ENCODE measurements at regions of chr6 and their contacts with region 1.

Region 1: DNA sequence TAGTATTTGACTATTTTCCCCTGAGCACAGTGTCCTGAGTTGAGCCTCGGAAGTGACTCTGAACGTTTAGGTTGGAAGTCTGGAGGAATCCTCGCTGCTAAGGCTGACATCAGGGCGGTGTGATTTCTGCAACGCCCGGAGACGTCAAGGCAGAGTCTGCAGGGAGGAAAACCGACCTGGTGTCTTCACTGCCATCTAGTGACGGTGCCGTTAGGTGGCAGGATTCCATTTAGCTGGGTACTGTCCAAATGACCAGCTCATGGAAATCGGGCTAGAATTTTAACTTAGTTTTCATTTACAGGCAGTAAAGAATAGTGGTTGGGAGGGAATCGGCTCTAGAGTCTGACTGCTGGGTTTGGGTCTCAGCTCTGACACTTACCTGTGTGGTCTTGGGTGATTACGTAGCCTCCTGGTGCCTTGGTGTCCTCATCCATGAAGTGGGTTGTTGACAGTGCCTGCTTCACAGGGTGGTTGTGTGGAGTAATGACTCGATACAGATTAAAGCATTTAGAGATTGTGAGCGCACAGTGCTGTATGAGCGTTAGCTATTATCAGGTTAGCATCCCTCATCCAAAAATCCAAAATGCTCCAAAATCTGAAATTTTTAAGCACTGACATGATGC is 35.0 kb downstream of the FOXF2 start:
- DNase-seq: no peak
- H3K4me3 ChIP-seq: no peak overlapping the region
- H3K4me3 Mint-ChIP-seq: peak overlapping the region in 1 of 8 donors; percentile 38
- H3K27ac ChIP-seq: no peak overlapping the region
- H3K27ac Mint-ChIP-seq: no peak overlapping the region
- H3K4me1 ChIP-seq: peaks cover 4% of the 10 kb centered on the region
- H3K4me1 Mint-ChIP-seq: peaks cover 2 to 4% (median 4%) of the 10 kb centered on the region in 4 donors
- H3K27me3 ChIP-seq: no peaks in the 10 kb centered on the region
- H3K27me3 Mint-ChIP-seq: peaks cover 22 to 26% of the 10 kb centered on the region in 2 donors

Region 2: DNA sequence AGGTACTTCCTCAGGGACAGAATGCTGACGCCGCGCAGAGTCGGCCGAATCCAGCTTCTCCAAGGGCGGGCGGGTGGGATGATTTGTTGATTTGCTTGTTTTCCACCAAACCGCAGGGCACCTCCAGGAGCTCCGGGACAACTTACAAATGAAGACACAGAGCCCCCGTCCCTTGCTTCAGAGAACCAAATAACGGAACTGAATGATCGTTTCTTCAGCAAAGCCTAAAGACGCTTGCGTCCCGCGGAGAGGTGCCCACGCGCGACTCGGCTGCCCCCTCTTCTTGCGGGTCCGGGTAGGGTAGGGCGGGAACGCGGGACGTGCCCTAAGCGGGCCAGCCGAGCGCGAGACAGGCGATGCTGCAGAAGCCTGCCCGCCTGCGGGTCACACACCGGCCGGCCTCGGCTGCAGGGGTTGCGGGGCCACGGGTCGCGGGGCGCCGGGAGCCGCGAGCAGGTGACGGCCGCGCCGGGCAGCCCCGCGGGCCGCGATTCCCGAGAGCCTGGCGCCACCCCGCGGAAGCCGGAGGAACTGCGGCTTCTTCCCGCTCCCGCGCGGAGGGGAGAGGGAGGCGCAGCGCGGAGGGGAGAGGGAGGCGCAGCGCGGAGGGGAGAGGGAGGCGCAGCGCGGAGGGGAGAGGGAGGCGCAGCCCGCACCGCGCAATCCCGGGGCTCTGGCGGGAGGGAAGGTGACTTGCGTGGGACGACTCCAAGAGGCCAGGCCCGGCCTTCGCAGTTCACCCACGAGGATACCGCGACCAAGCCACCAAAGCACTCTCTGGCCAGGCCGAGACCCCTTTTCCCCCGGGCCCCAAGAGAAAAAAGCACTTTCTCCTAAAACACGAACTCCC is 42.7 kb before region 1 on chr6:
- CTCF ChIA-PET with region 1: no interaction called
- POLR2A ChIA-PET with region 1: no interaction called
- intact Hi-C with region 1: no loop called
- DNase-seq: peak in 4 of 5 donors; percentile 36 to 57 (median 48)
- H3K4me3 ChIP-seq: no peak overlapping the region
- H3K4me3 Mint-ChIP-seq: peak overlapping the region in 6 of 8 donors; percentile 21 to 74 (median 55)
- H3K27ac ChIP-seq: no peak overlapping the region
- H3K27ac Mint-ChIP-seq: no peak overlapping the region
- H3K4me1 ChIP-seq: peaks cover 38% of the 10 kb centered on the region
- H3K4me1 Mint-ChIP-seq: peaks cover 15 to 41% (median 33%) of the 10 kb centered on the region in 4 donors
- H3K27me3 ChIP-seq: peaks cover 41% of the 10 kb centered on the region
- H3K27me3 Mint-ChIP-seq: peaks cover 42 to 51% of the 10 kb centered on the region in 2 donors

Region 3: DNA sequence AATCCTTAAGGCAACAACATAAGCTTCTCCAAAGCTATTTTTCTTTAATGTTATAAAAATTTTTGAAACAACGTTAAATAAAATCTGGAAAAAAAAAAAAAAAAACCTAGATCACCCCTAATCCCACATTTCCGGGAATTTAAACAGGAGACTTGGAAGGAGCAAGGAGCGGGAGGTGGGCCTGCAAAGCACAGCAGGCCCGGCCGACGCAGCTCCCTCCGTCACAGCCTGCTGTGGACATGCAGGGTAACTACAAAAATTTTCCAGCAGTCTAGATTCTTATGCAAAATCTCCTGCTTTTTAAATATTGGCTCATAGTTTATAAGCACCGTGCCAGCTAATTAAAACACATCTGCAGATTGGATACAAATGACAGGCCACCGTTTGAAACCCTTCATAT is 11.5 kb before region 1 on chr6:
- CTCF ChIA-PET with region 1: interaction called, 16 read pairs
- POLR2A ChIA-PET with region 1: no interaction called
- intact Hi-C with region 1: no loop called
- DNase-seq: no peak
- H3K4me3 ChIP-seq: no peak overlapping the region
- H3K4me3 Mint-ChIP-seq: no peak overlapping the region
- H3K27ac ChIP-seq: no peak overlapping the region
- H3K27ac Mint-ChIP-seq: no peak overlapping the region
- H3K4me1 ChIP-seq: no peaks in the 10 kb centered on the region
- H3K4me1 Mint-ChIP-seq: no peaks in the 10 kb centered on the region
- H3K27me3 ChIP-seq: no peaks in the 10 kb centered on the region
- H3K27me3 Mint-ChIP-seq: peaks cover 12 to 31% of the 10 kb centered on the region in 2 donors

Measured in CD4-positive, alpha-beta memory T cell (primary cell).